Esophagus muscularis mucosa (tissue), 4 donors: ENCODE measurements at regions of chrX and their contacts with region 1.

Region 1: GRCh38 chrX:71181910-71182799 is 37.5 kb downstream of the NLGN3 start:
- DNase-seq: peak; percentile 96
- H3K4me3 ChIP-seq: peak overlapping the region; percentile 49 to 61 (median 56)
- H3K27ac ChIP-seq: peak overlapping the region; percentile 87 to 88 (median 88)
- H3K4me1 ChIP-seq: peaks cover 5 to 16% (median 10%) of the 10 kb centered on the region in 4 donors
- H3K27me3 ChIP-seq: no peaks in the 10 kb centered on the region
- CTCF ChIP-seq: no peak
- EP300 ChIP-seq: no peak
- POLR2A ChIP-seq: no peak

Region 2: GRCh38 chrX:70769659-70770232 is 412.4 kb before region 1 on chrX:
- intact Hi-C with region 1: loop called (anchors 10 kb)
- DNase-seq: no peak
- H3K4me3 ChIP-seq: no peak overlapping the region
- H3K27ac ChIP-seq: no peak overlapping the region
- H3K4me1 ChIP-seq: no peaks in the 10 kb centered on the region
- H3K27me3 ChIP-seq: no peaks in the 10 kb centered on the region
- CTCF ChIP-seq: peak in 2 of 3 experiments; percentile 42 to 43
- EP300 ChIP-seq: no peak
- POLR2A ChIP-seq: no peak

Region 3: DNA sequence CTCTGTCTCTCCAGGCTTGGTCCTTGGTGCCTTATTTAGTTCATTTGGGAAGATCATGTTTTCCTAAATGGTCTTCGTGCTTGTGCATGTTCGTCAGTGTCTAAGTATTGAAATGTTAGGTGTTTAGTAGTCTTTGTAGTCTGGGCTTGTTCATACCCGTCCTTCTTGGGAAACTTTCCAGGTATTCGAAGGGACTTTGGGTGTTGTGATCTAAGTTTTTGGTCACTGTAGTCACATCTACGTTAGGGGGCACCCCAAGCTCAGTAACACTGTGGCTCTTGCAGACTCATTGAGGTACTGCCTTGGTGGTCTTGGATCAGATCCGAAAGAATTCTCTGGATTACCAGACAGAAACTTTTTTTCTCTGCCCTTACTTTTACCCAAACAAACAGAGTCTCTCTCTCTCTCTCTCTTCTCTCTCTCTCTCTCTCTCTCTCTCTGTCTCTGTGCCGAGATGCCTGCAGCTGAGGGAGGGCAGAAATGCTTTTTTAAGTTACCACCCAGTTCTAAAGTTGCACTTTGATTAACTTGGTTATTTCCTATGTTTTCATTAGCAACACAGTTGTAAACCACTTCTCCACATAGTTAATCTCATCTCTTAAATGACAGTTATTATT is 183.6 kb before region 1 on chrX:
- intact Hi-C with region 1: loop called (anchors 10 kb)
- DNase-seq: no peak
- H3K4me3 ChIP-seq: no peak overlapping the region
- H3K27ac ChIP-seq: no peak overlapping the region
- H3K4me1 ChIP-seq: no peaks in the 10 kb centered on the region
- H3K27me3 ChIP-seq: no peaks in the 10 kb centered on the region
- CTCF ChIP-seq: peak in 1 of 3 experiments; percentile 28
- EP300 ChIP-seq: no peak
- POLR2A ChIP-seq: no peak

Region 4: GRCh38 chrX:71098302-71098701 is 83.9 kb before region 1 on chrX:
- intact Hi-C with region 1: loop called (anchors 2 kb)
- DNase-seq: no peak
- H3K4me3 ChIP-seq: no peak overlapping the region
- H3K27ac ChIP-seq: no peak overlapping the region
- H3K4me1 ChIP-seq: peaks cover 8 to 41% (median 31%) of the 10 kb centered on the region in 4 donors
- H3K27me3 ChIP-seq: peaks cover 0 to 5% (median 0%) of the 10 kb centered on the region in 4 donors
- CTCF ChIP-seq: peak; percentile 42 to 54 (median 46)
- EP300 ChIP-seq: no peak
- POLR2A ChIP-seq: no peak

Region 5: DNA sequence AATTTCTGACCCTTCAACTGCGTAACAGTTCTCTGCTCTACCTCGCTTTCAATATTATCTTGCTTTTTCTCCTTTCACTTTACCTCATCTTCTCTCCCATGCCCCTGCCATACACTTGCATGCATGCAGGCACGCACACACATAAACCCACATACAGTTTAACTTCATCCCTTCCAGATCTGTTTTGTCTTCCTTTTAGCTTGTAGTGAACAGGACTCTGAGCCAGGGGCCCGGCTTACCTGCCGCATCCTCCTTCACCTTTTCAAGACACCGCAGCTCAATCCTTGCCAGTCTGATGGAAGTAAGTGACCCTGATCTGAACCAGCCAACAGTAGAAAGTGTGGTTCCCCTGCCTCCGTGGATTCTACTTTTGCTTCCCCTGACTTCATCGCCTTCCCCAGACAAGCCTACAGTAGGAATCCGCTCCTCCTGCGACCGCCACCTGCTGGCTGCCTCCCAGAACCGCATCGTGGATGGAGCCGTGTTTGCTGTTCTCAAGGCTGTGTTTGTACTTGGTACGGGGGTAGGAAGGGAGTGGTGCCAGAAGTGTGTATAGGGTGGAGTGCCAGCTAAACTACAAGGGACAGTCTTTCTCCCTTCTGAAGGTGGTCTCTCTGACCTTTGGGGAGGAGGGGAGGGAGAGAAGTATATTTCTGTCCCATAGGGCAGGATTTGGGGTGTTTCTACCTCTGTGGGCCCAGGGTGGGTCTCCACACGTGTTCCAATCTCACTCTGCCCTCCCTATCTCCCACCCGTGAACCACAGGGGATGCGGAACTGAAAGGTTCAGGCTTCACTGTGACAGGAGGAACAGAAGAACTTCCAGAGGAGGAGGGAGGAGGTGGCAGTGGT is 53.0 kb before region 1 on chrX:
- intact Hi-C with region 1: loop called (anchors 10 kb)
- DNase-seq: no peak
- H3K4me3 ChIP-seq: no peak overlapping the region
- H3K27ac ChIP-seq: no peak overlapping the region
- H3K4me1 ChIP-seq: peaks cover 0 to 8% (median 2%) of the 10 kb centered on the region in 4 donors
- H3K27me3 ChIP-seq: no peaks in the 10 kb centered on the region
- CTCF ChIP-seq: peak; percentile 57 to 70 (median 59)
- EP300 ChIP-seq: no peak
- POLR2A ChIP-seq: no peak

Region 6: DNA sequence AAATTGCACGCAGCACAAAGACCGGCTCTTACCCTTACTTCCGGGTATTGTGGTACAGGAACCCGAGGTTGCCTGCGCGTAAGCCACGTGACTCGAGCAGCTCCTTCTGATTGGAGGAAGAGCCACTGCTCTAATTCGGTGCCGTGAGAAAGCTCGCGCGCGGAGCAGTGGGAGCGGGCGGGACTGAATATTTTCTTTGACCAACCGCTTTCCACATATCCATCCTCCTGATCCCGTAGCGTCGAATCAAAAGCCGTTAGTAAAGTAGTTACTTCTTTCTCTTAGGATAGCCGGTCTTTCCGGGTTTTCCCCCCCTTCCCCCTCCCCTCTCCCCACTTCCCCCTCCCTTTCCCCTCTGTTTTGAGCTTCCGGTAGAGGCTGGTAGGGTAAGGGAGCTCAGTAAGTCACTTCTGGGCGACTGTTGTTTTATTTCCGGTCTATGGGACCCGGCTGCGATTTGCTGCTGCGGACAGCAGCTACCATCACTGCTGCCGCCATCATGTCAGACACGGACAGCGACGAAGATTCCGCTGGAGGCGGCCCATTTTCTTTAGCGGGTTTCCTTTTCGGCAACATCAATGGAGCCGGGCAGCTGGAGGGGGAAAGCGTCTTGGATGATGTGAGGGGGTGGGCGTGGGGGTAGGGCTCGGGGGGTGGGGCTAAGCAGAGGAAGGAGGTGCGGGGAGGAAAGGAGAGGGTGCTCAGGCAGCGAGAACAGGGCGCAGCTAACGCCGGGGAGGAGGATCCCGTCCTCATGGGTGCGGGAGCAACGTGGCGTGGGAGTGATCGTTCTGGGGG is 183.9 kb after region 1 on chrX and contains the start of gene TAF1:
- intact Hi-C with region 1: loop called (anchors 10 kb)
- DNase-seq: peak; percentile 98
- H3K4me3 ChIP-seq: peak within 1 kb of the TSS; percentile 61 to 78 (median 68)
- H3K27ac ChIP-seq: peak within 1 kb of the TSS; percentile 81 to 94 (median 90)
- H3K4me1 ChIP-seq: peaks cover 0 to 32% (median 16%) of the 10 kb centered on the region in 4 donors
- H3K27me3 ChIP-seq: no peaks in the 10 kb centered on the region
- CTCF ChIP-seq: no peak
- EP300 ChIP-seq: no peak
- POLR2A ChIP-seq: peak; percentile 78
- total RNA-seq, gene TAF1: 34.3 to 59.4 (median 41.4) TPM